ENCODE measurements at regions of chr10 and their contacts with region 1.

Region 1: GRCh38 chr10:71527135-71527534 is 130.4 kb downstream of the CDH23 start:
- DNase-seq: no peak
- H3K4me3 ChIP-seq: no peak overlapping the region
- H3K4me3 Mint-ChIP-seq: no peak overlapping the region
- H3K27ac Mint-ChIP-seq: no peak overlapping the region
- H3K4me1 ChIP-seq: peaks cover 12% of the 10 kb centered on the region
- H3K4me1 Mint-ChIP-seq: no peaks in the 10 kb centered on the region
- H3K27me3 ChIP-seq: no peaks in the 10 kb centered on the region; the same call in 1 of the 2 replicates
- H3K27me3 Mint-ChIP-seq: no peaks in the 10 kb centered on the region
- CTCF ChIP-seq: no peak

Region 2: GRCh38 chr10:71465551-71466252 is 61.4 kb before region 1 on chr10:
- CTCF ChIA-PET with region 1: no interaction called
- POLR2A ChIA-PET with region 1: no interaction called
- intact Hi-C with region 1: no loop called
- DNase-seq: no peak
- H3K4me3 ChIP-seq: no peak overlapping the region
- H3K4me3 Mint-ChIP-seq: no peak overlapping the region
- H3K27ac Mint-ChIP-seq: no peak overlapping the region
- H3K4me1 ChIP-seq: no peaks in the 10 kb centered on the region
- H3K4me1 Mint-ChIP-seq: no peaks in the 10 kb centered on the region
- H3K27me3 ChIP-seq: no peaks in the 10 kb centered on the region
- H3K27me3 Mint-ChIP-seq: peaks cover 13% of the 10 kb centered on the region
- CTCF ChIP-seq: no peak

Region 3: GRCh38 chr10:71512775-71513539 is 14.2 kb before region 1 on chr10:
- CTCF ChIA-PET with region 1: interaction called, 12 read pairs
- POLR2A ChIA-PET with region 1: no interaction called
- intact Hi-C with region 1: no loop called
- DNase-seq: peak; percentile 71 to 80
- H3K4me3 ChIP-seq: no peak overlapping the region
- H3K4me3 Mint-ChIP-seq: no peak overlapping the region
- H3K27ac Mint-ChIP-seq: peak overlapping the region; percentile 47
- H3K4me1 ChIP-seq: peaks cover 13% of the 10 kb centered on the region
- H3K4me1 Mint-ChIP-seq: peaks cover 11% of the 10 kb centered on the region
- H3K27me3 ChIP-seq: no peaks in the 10 kb centered on the region
- H3K27me3 Mint-ChIP-seq: no peaks in the 10 kb centered on the region
- CTCF ChIP-seq: no peak